ENCODE measurements at regions of chr5 and their contacts with region 1.

Region 1: DNA sequence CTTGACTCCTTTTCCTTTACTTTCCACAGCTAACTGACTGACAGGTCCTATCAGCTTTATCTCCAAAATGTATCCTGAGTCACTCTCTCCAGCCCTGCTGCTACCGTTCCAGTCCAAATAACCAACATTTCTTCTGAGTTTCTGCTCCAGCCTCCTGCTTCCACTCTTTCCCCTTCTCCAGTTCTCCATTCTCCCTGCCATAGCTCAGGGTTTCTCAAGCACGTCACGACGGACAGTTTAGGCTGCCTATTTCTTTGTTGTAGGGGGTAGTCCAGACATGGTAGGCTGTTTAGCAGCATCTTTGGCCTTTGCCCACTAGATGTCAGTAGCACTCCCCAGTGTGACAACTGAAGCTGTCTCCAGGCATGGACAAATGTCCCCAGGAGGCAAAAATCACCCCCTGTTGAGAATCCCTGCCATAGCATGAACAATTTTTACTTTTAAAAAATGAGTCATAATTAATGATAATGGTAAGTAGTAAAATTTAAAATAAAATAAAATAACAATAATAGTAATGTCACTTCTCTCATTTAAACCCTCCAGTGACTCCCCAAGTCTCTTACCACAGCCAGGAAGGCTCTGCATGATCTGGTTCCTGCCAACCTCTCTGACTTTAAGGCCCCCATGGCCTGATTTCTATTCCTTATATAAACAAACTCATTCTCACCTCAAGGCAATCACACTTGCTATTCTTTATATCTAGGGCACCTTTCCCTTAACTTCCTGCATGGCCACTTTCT is 105.4 kb upstream of the FER start:
- DNase-seq: peak; percentile 81
- H3K4me3 Mint-ChIP-seq: no peak overlapping the region
- H3K27ac Mint-ChIP-seq: no peak overlapping the region
- H3K4me1 Mint-ChIP-seq: peaks cover 2% of the 10 kb centered on the region
- H3K27me3 Mint-ChIP-seq: peaks cover 7% of the 10 kb centered on the region

Region 2: GRCh38 chr5:109468737-109469420 is 826.5 kb after region 1 on chr5:
- intact Hi-C with region 1: loop called (anchors 10 kb)
- DNase-seq: peak; percentile 87
- H3K4me3 Mint-ChIP-seq: no peak overlapping the region
- H3K27ac Mint-ChIP-seq: no peak overlapping the region
- H3K4me1 Mint-ChIP-seq: no peaks in the 10 kb centered on the region
- H3K27me3 Mint-ChIP-seq: peaks cover 13% of the 10 kb centered on the region

Region 3: GRCh38 chr5:110625376-110625999 is 1983.2 kb after region 1 on chr5:
- intact Hi-C with region 1: loop called (anchors 5 kb)
- DNase-seq: no peak
- H3K4me3 Mint-ChIP-seq: no peak overlapping the region
- H3K27ac Mint-ChIP-seq: no peak overlapping the region
- H3K4me1 Mint-ChIP-seq: no peaks in the 10 kb centered on the region
- H3K27me3 Mint-ChIP-seq: no peaks in the 10 kb centered on the region

Measured in activated CD4-positive, alpha-beta T cell treated with anti-CD3 and anti-CD28 coated beads, Interleukin-2, amount 10 ng/mL, durations not matched to agents 24 days and 14 days (primary cell).